ENCODE measurements at regions of chr3 and their contacts with region 1.

Region 1: DNA sequence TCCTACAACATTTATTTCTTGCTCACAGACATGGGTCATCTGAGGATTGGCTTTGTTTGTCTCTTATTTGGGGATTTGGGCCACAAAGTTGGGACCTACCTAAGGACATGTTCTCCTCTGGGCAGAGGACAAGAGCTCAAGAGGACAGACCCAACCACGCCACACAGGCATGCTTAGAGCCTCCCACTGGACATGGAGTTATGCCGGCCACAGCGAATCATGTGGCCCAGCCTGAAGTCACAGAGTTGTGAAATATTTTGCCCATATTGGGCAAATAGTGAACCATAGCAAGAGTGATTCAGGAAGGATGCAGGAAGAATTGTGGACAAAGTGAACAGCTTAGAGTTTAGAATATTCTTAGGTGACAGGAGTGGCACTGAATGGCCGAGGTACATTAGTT is 9.9 kb downstream of the TRAK1 start:
- DNase-seq: peak; percentile 32
- H3K4me3 ChIP-seq: no peak overlapping the region
- H3K27ac ChIP-seq: peak overlapping the region; percentile 39
- H3K27me3 ChIP-seq: no peaks in the 10 kb centered on the region
- CTCF ChIP-seq: no peak

Region 2: GRCh38 chr3:41893977-41894376 is 207.1 kb before region 1 on chr3:
- CTCF ChIA-PET with region 1: interaction called, 142 read pairs
- POLR2A ChIA-PET with region 1: no interaction called
- DNase-seq: no peak
- H3K4me3 ChIP-seq: no peak overlapping the region
- H3K27ac ChIP-seq: no peak overlapping the region
- H3K27me3 ChIP-seq: no peaks in the 10 kb centered on the region
- CTCF ChIP-seq: peak; percentile 51

Region 3: DNA sequence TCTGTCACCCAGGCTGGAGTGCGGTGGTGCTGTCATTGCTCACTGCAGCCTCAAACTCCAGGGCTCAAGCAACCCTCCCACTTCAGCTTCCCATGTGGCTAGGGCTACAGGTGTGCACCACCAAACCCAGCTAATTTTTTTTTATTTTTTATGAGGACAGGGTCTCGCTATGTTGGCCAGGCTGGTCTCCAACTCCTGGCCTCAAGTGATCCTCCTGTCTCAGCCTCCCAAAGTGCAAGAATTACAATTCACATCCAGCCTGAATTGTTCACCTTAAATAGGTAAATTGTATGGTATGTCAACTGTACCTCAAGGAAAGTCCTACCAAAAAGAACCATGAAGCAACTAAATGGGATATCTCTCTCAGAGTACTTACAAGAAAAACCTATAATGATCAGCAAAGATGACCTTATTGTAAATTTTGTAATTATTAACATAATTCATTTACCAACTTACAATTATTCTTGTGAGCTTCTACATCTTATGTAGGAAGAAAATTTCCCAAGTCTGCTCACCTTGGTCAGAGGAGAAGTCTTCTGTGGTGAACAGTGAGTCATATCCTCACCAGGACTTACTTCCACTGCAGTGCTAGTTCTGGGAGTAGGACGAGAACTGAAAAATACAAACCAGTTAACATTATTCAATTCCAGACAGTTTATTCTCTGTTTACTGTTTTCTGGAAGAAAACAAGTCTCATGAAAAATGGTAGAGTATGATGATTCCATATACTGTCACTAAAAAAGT is 193.5 kb before region 1 on chr3:
- CTCF ChIA-PET with region 1: interaction called, 13 read pairs
- POLR2A ChIA-PET with region 1: no interaction called
- DNase-seq: no peak
- H3K4me3 ChIP-seq: no peak overlapping the region
- H3K27ac ChIP-seq: no peak overlapping the region
- H3K27me3 ChIP-seq: no peaks in the 10 kb centered on the region
- CTCF ChIP-seq: no peak

Region 4: GRCh38 chr3:41997702-41998550 is 103.1 kb before region 1 on chr3:
- CTCF ChIA-PET with region 1: interaction called, 42 read pairs
- POLR2A ChIA-PET with region 1: no interaction called
- DNase-seq: no peak
- H3K4me3 ChIP-seq: no peak overlapping the region
- H3K27ac ChIP-seq: no peak overlapping the region
- H3K27me3 ChIP-seq: no peaks in the 10 kb centered on the region
- CTCF ChIP-seq: peak; percentile 60

Region 5: DNA sequence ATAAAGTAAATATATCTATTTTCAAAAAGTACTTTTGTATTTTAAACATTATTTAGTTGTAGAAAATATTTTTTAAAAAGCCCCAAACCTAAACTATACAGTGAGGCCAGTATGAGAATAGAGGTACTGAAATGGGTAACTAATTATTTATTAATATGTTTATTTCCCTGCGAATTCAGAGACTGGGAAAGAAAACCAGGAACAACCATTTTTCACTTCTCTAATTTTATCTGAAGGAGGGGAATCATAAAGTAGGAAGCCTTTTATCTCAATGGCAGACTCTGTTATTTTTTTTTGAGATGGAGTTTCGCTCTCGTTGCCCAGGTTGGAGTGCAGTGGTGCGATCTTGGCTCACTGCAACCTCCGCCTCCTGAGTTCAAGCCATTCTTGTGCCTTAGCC is 73.5 kb before region 1 on chr3:
- CTCF ChIA-PET with region 1: interaction called, 14 read pairs
- POLR2A ChIA-PET with region 1: no interaction called
- DNase-seq: no peak
- H3K4me3 ChIP-seq: no peak overlapping the region
- H3K27ac ChIP-seq: no peak overlapping the region
- H3K27me3 ChIP-seq: no peaks in the 10 kb centered on the region
- CTCF ChIP-seq: no peak

Region 6: GRCh38 chr3:42080452-42080891 is 20.6 kb before region 1 on chr3:
- CTCF ChIA-PET with region 1: interaction called, 35 read pairs
- POLR2A ChIA-PET with region 1: no interaction called
- DNase-seq: no peak
- H3K4me3 ChIP-seq: no peak overlapping the region
- H3K27ac ChIP-seq: no peak overlapping the region
- H3K27me3 ChIP-seq: no peaks in the 10 kb centered on the region
- CTCF ChIP-seq: no peak

Region 7: DNA sequence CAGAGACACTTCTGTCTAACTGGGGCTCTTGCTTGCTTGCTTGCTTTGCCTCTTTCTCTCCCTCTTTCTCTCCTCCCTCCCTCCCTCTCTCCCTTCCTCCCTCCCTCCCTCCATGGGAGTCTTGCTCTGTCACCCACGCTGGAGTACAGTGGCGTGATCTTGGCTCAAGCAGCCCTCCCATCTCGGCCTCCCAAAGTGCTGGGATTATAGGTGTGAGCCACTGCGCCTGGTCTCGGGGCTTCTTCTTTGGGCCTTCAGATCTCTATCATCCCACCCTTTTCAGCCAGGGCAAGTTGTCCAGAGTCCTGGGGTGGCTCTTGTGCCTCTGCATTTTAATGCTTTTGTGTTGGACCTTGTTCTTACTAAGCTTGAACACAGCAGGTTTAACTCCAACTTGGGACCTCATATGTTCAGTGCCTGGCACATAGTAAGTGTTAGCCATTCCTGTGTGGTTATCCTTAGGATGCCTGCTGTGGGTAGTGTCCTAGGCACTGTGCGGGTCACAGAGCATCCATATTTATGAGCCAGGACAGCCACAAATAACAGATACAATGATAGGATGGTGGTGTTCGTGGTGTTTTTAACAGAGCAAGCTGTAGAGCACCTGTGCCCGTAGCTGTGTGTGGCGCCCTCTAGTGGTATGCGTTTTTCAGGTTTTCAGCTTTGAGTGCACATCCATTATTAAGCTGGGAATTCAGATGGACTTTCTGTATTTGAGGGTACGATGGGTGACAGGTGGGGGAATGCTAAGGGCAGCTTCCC is 89.8 kb after region 1 on chr3:
- CTCF ChIA-PET with region 1: interaction called, 19 read pairs
- POLR2A ChIA-PET with region 1: no interaction called
- DNase-seq: no peak
- H3K4me3 ChIP-seq: no peak overlapping the region
- H3K27ac ChIP-seq: no peak overlapping the region
- H3K27me3 ChIP-seq: no peaks in the 10 kb centered on the region
- CTCF ChIP-seq: peak; percentile 89

Region 8: GRCh38 chr3:42210736-42211135 is 109.7 kb after region 1 on chr3:
- CTCF ChIA-PET with region 1: no interaction called
- POLR2A ChIA-PET with region 1: no interaction called
- DNase-seq: no peak
- H3K4me3 ChIP-seq: no peak overlapping the region
- H3K27ac ChIP-seq: no peak overlapping the region
- H3K27me3 ChIP-seq: no peaks in the 10 kb centered on the region
- CTCF ChIP-seq: no peak

Measured in AG04450 (cell line).